HEK293 (cell line): ENCODE measurements at regions of chr12 and their contacts with region 1.

Region 1: DNA sequence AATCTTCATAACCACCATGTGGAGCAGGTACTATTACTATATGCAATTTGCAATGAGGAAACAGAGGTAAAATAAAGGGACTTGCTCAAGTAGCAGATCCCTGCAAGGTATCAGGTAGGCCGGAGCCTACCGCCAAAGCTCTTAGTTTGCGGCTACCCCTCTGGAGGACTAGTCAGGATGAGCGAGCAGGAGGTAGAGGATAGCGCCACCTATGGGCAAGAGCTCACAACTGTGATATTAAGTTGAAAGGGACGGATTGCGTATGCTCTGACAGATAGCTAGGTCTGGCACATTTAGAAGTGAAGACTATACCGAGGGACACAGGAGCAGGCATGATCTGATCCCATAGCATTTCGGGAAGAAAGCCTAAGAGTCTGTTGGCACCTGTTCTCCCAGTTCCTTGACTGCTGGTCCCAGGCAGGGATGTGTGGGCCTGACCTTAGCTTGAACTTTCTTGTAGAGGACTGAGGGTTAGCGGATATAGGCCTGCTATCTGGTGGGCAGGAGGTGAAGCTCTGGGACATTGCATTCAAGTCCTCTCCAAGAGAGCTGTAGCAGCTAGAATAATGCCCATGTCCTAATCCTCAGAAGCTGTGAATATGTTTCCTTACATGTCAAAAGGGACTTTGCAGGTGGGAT is 48.0 kb downstream of the SLC17A8 start:
- H3K4me3 ChIP-seq: no peak overlapping the region
- H3K27ac ChIP-seq: no peak overlapping the region
- H3K4me1 ChIP-seq: no peaks in the 10 kb centered on the region
- CTCF ChIP-seq: no peak

Region 2: GRCh38 chr12:100185361-100185894 is 219.5 kb before region 1 on chr12:
- CTCF ChIA-PET with region 1: no interaction called
- POLR2A ChIA-PET with region 1: no interaction called
- H3K4me3 ChIP-seq: no peak overlapping the region
- H3K27ac ChIP-seq: no peak overlapping the region
- H3K4me1 ChIP-seq: no peaks in the 10 kb centered on the region
- CTCF ChIP-seq: no peak

Region 3: DNA sequence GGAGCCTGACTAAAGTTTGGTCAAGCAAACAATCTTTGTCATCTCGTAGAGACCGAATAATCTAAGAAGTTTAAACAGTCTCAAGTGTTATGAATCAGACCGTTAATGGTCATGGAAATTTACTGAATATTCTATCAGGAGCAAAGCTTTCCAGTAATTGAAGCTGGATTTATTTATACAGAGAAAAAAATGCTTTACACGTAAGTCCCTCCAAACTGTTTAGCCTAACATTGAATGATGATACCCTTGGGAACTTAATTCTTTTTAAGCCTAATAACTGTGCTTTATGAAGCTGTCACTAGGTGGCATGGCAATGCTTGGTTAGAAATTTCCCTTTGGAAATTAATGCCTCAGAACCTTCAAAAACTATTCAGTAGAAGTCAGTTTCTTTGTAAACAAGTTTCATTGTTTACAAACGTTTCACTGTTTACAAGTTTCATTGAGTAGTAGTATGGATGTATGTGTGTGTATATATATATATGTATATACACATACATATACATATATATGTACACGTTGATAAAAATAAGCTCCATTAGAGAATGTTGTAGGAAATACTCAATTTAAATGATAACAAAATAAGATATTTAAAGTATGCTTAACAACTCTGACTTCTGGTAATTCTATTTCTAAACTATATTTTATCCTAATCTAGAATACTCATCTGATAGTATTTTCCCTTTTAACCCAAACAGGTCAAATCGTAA is 170.1 kb before region 1 on chr12:
- CTCF ChIA-PET with region 1: interaction called, 17 read pairs
- POLR2A ChIA-PET with region 1: no interaction called
- H3K4me3 ChIP-seq: no peak overlapping the region
- H3K27ac ChIP-seq: no peak overlapping the region
- H3K4me1 ChIP-seq: no peaks in the 10 kb centered on the region
- CTCF ChIP-seq: 0 out of 2 replicates have a peak, but pooled peaks have one; percentile 46

Region 4: GRCh38 chr12:100348657-100349454 is 56.0 kb before region 1 on chr12:
- CTCF ChIA-PET with region 1: interaction called, 14 read pairs
- POLR2A ChIA-PET with region 1: no interaction called
- H3K4me3 ChIP-seq: no peak overlapping the region
- H3K27ac ChIP-seq: no peak overlapping the region
- H3K4me1 ChIP-seq: no peaks in the 10 kb centered on the region
- CTCF ChIP-seq: peak; percentile 24; the same call in 1 of the 2 replicates

Region 5: DNA sequence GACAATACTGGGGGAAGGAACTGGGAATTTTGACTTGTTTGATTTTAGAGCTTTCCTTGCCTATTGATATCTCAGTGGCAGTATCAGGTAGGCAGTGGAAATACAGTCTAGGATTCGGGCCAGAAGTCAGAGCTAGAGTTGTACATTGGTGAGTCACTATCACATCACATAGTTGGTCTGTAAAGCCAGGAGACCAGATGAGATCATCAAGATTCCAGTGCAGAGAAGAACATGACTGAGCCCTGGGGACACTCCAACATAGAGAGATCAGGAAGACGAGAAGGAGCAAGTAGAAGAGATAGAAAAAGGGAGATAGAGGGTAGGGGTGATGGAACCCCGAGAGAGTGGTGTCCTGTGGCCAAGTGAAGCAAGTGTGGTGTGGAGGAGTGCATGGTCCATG is 22.2 kb after region 1 on chr12:
- CTCF ChIA-PET with region 1: interaction called, 15 read pairs
- POLR2A ChIA-PET with region 1: no interaction called
- H3K4me3 ChIP-seq: no peak overlapping the region
- H3K27ac ChIP-seq: no peak overlapping the region
- H3K4me1 ChIP-seq: no peaks in the 10 kb centered on the region
- CTCF ChIP-seq: no peak

Region 6: GRCh38 chr12:100448656-100449055 is 43.8 kb after region 1 on chr12:
- CTCF ChIA-PET with region 1: interaction called, 11 read pairs
- POLR2A ChIA-PET with region 1: no interaction called
- H3K4me3 ChIP-seq: no peak overlapping the region
- H3K27ac ChIP-seq: no peak overlapping the region
- H3K4me1 ChIP-seq: no peaks in the 10 kb centered on the region
- CTCF ChIP-seq: no peak

Region 7: GRCh38 chr12:100453951-100454350 is 49.1 kb after region 1 on chr12:
- CTCF ChIA-PET with region 1: interaction called, 11 read pairs
- POLR2A ChIA-PET with region 1: no interaction called
- H3K4me3 ChIP-seq: no peak overlapping the region
- H3K27ac ChIP-seq: no peak overlapping the region
- H3K4me1 ChIP-seq: no peaks in the 10 kb centered on the region
- CTCF ChIP-seq: no peak

Region 8: DNA sequence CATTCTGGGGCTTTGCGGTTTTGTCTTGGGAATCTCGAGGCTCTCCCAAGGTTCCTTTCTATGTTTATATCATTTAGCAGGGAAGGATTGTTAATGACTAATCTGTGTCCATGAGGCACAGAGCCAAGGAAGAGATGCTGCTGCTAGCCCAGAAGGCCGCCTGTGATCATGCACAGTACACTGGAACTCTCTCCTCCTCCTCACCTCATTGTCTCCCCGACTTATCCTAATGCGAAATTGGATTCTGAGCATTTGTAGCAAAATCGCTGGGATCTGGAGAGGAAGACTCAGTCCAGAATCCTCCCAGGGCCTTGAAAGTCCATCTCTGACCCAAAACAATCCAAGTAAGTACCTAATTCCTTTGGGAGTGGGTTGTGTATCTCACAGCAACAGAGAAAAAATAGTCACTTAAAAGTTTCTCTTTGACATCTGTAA is 68.8 kb after region 1 on chr12 and contains the start of gene NR1H4:
- CTCF ChIA-PET with region 1: no interaction called
- POLR2A ChIA-PET with region 1: no interaction called
- H3K4me3 ChIP-seq: no peak within 1 kb of the TSS
- H3K27ac ChIP-seq: no peak within 1 kb of the TSS
- H3K4me1 ChIP-seq: no peaks in the 10 kb centered on the region
- CTCF ChIP-seq: no peak

Region 9: DNA sequence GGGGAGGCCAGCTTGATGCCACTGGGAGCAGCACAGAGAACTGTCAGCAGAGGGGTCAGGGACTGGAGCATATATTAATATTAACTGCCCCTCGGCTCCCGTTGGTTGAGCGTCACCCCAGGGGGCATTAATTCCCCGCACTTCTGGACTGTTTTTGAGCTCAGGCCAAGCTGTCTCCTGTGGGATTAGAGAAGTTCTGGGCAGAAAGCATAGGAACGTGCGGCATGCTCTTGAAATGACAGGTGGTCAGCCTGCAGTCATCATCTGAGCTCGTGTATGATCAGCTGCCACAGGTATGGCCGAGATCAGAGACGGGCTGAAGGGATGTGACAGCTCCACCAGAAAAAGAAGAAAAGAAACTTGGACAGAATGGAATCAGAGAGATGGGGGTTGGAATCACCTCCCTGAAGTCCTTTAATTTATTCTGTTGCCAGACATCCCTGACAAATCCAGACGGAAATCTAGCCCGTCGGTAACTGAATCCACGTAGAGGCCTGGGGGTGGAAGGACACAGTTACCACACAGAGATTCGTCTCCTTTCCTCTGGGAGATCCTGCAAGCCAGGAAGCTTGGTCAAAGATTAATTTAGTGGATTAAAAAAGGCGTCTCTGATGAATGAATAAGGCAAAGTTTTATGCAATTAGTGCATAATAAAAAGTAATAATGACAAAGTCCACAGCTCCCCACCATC is 92.4 kb after region 1 on chr12:
- CTCF ChIA-PET with region 1: no interaction called
- POLR2A ChIA-PET with region 1: no interaction called
- H3K4me3 ChIP-seq: no peak overlapping the region
- H3K27ac ChIP-seq: no peak overlapping the region
- H3K4me1 ChIP-seq: no peaks in the 10 kb centered on the region
- CTCF ChIP-seq: no peak